Esophagus squamous epithelium (tissue), 5 donors: ENCODE measurements at regions of chr6 and their contacts with region 1.

Region 1: DNA sequence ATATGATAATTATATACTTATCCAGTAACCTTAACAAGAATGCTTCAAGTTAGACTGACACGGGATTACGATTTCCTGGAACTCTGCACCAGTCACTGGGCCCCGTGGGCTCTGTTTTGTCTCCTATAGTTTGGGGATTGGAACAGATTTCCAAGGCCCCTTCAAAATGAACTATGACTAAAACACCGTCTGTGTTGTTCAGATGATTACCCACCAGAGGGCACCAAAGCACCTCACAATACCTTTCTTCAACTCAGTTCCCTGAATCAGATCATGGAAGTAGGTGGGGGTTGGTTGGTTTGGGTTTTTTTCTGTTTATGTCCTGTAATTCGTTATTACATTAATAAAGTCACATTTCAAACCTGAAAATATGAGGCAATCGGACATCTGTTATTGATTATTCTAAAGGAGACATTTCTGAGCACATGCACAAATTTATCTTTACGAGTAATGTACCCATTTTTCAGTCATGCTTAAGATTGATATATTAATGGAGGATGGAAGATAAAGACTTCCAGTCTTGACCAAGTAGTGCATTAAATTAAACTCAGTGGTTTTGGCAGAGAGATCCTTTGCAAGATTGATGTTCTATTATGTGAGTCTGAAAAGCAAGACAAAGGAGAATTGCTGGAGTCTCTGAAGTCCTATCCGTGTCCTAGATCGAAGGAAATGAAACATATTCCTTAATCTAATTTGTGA is 112.0 kb upstream of the COL21A1 start:
- DNase-seq: peak; percentile 12
- H3K4me3 ChIP-seq: no peak overlapping the region
- H3K27ac ChIP-seq: no peak overlapping the region
- H3K4me1 ChIP-seq: no peaks in the 10 kb centered on the region
- H3K27me3 ChIP-seq: no peaks in the 10 kb centered on the region
- CTCF ChIP-seq: peak; percentile 52 to 88 (median 82)
- POLR2A ChIP-seq: no peak

Region 2: GRCh38 chr6:56593801-56594318 is 234.5 kb after region 1 on chr6:
- intact Hi-C with region 1: loop called (anchors 5 kb)
- DNase-seq: no peak
- H3K4me3 ChIP-seq: no peak overlapping the region
- H3K27ac ChIP-seq: no peak overlapping the region
- H3K4me1 ChIP-seq: peaks cover 0 to 6% (median 0%) of the 10 kb centered on the region in 3 donors
- H3K27me3 ChIP-seq: no peaks in the 10 kb centered on the region
- CTCF ChIP-seq: no peak
- POLR2A ChIP-seq: no peak